ENCODE measurements at regions of chr1 and their contacts with region 1.

Region 1: DNA sequence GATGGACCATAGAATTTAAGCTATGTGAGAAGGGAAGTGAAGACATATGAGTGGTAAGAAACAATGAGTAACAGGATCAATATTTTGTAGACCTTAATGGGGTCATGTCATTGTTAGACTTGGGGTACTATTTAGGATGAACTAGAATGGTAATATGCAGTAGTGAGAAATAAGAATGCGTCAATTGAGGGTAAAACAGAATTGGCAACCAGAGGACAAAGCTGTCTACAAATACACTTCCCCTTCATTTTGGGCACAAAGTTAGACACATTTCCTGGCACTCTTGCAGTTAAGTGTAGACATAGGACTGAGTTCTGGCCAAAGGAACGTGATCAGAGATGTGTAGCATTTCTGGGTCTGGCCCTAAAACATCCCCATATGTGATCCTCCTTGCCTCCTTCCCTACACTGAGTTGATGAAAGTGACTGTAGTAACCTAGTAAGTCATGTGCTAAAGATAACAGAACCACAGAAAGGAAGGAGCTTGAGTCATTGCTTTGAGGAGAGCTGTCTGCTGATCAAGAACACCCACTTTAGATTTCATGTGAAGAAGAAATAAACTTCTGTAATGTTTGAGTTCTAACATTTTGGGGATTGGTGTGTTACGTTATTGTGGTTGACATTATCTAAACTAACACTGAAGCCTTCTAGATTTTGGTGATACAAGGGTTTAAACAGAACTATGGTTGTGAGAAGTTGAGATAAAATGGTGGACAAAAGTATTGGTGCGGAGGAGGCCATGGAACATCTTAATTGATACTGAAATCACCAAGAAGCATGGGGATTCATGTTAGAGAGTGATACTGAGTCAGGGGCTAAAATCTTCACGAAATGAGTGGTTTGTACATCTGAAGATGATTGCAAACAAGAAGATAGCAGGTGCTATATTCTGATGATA is 41.7 kb downstream of the CD55 start:
- DNase-seq: no peak
- ATAC-seq: no peak
- H3K4me3 ChIP-seq: no peak overlapping the region
- H3K27ac ChIP-seq: no peak overlapping the region
- H3K4me1 ChIP-seq: no peaks in the 10 kb centered on the region
- H3K27me3 ChIP-seq: no peaks in the 10 kb centered on the region
- CTCF ChIP-seq: no peak
- EP300 ChIP-seq: no peak
- POLR2A ChIP-seq: no peak
- RAD21 ChIP-seq: no peak

Region 2: DNA sequence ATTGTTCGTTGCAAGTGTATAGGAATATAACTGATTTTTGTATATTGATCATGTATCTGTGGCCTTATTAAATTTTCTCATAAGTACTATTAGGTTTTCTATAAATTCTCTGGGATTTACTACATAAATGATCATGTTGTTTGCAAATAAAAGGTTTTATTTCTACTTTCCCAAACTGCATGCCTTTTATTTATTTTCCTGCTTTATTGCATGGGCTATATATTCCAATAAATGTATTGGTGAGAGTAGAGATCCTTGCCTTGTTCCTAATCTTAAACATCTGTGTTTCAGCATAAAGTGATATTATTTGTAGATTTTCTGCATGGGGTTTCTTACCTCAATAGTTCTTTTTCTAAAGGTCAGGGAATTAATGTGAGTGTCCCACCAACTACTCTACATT is 148.8 kb before region 1 on chr1:
- CTCF ChIA-PET with region 1: no interaction called
- POLR2A ChIA-PET with region 1: no interaction called
- RAD21 ChIA-PET with region 1: no interaction called
- SMC1A ChIA-PET with region 1: no interaction called
- in situ Hi-C with region 1: no loop called
- intact Hi-C with region 1: no loop called
- DNase-seq: no peak
- ATAC-seq: no peak
- H3K4me3 ChIP-seq: no peak overlapping the region
- H3K27ac ChIP-seq: no peak overlapping the region
- H3K4me1 ChIP-seq: peaks cover 13% of the 10 kb centered on the region
- H3K27me3 ChIP-seq: no peaks in the 10 kb centered on the region
- CTCF ChIP-seq: no peak
- EP300 ChIP-seq: no peak
- POLR2A ChIP-seq: no peak
- RAD21 ChIP-seq: no peak

Region 3: GRCh38 chr1:207389740-207390464 is 26.7 kb after region 1 on chr1:
- CTCF ChIA-PET with region 1: no interaction called
- POLR2A ChIA-PET with region 1: no interaction called
- RAD21 ChIA-PET with region 1: no interaction called
- SMC1A ChIA-PET with region 1: no interaction called
- in situ Hi-C with region 1: no loop called
- intact Hi-C with region 1: loop called (anchors 2 kb)
- DNase-seq: no peak
- ATAC-seq: no peak
- H3K4me3 ChIP-seq: no peak overlapping the region
- H3K27ac ChIP-seq: no peak overlapping the region
- H3K4me1 ChIP-seq: no peaks in the 10 kb centered on the region
- H3K27me3 ChIP-seq: no peaks in the 10 kb centered on the region
- CTCF ChIP-seq: no peak
- EP300 ChIP-seq: no peak
- POLR2A ChIP-seq: no peak
- RAD21 ChIP-seq: no peak

Region 4: GRCh38 chr1:207404849-207405525 is 41.8 kb after region 1 on chr1:
- CTCF ChIA-PET with region 1: no interaction called
- POLR2A ChIA-PET with region 1: no interaction called
- RAD21 ChIA-PET with region 1: no interaction called
- SMC1A ChIA-PET with region 1: no interaction called
- in situ Hi-C with region 1: no loop called
- intact Hi-C with region 1: no loop called
- DNase-seq: no peak
- ATAC-seq: peak; percentile 95
- H3K4me3 ChIP-seq: no peak overlapping the region
- H3K27ac ChIP-seq: no peak overlapping the region
- H3K4me1 ChIP-seq: peaks cover 10% of the 10 kb centered on the region
- H3K27me3 ChIP-seq: no peaks in the 10 kb centered on the region
- CTCF ChIP-seq: peak; percentile 62 to 81 (median 65)
- EP300 ChIP-seq: no peak
- POLR2A ChIP-seq: no peak
- RAD21 ChIP-seq: peak; percentile 85